Naive thymus-derived CD4-positive, alpha-beta T cell (primary cell): ENCODE measurements at regions of chr7 and their contacts with region 1.

Region 1: DNA sequence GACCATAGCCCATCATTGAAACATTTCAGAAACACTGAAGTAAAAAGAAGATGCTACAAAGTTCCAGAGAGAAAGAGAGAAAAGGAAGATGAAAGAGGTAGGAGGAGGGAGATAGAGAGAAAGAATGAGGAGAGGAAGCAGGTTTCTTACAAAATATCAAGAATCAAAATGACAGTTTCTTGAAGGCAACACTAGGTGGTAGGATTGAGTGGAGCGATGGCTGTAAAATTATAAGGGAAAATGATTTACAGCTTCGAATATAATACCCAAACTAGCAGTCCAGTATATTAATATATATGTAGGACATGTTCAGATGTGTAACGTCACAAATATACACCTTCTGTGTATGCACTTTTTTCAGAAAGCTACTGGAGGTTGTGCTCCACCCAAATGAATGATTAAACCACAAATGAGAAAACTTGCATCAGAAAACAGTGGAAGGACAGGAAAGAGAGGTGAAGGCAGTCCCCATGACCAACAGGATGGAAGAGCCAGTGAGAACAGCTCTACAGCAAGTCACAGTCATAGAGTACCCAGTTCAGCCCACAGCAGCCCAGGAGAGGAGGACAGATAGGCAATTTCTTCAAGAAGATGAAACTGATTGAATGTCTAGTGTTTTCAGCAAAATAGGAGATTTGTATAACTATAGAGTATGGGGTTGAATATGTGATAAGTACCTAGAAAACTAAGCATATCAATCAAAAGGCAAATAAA is 151.5 kb upstream of the TARP start:
- DNase-seq: no peak
- ATAC-seq: no peak
- H3K4me3 ChIP-seq: no peak overlapping the region
- H3K4me3 Mint-ChIP-seq: peak overlapping the region in 9 of 10 donors; percentile 15 to 78 (median 61)
- H3K27ac ChIP-seq: peak overlapping the region; percentile 34
- H3K27ac Mint-ChIP-seq: peak overlapping the region in 8 of 9 donors; percentile 67 to 91 (median 85)
- H3K4me1 ChIP-seq: peaks cover 20 to 41% of the 10 kb centered on the region in 2 donors
- H3K4me1 Mint-ChIP-seq: peaks cover 28 to 64% (median 58%) of the 10 kb centered on the region in 7 donors
- H3K27me3 ChIP-seq: no peaks in the 10 kb centered on the region
- H3K27me3 Mint-ChIP-seq: peaks cover 0 to 10% (median 0%) of the 10 kb centered on the region in 5 donors

Region 2: GRCh38 chr7:38413784-38414183 is 11.1 kb before region 1 on chr7:
- CTCF ChIA-PET with region 1: no interaction called
- POLR2A ChIA-PET with region 1: interaction called, 3 read pairs
- intact Hi-C with region 1: loop called in 1 of 2 experiments (anchors 2 kb)
- DNase-seq: peak in 6 of 9 donors; percentile 24 to 60 (median 41)
- ATAC-seq: peak; percentile 54
- H3K4me3 ChIP-seq: no peak overlapping the region
- H3K4me3 Mint-ChIP-seq: peak overlapping the region in 7 of 10 donors; percentile 23 to 71 (median 40)
- H3K27ac ChIP-seq: no peak overlapping the region
- H3K27ac Mint-ChIP-seq: peak overlapping the region in 6 of 9 donors; percentile 38 to 90 (median 77)
- H3K4me1 ChIP-seq: peaks cover 0 to 12% of the 10 kb centered on the region in 2 donors
- H3K4me1 Mint-ChIP-seq: peaks cover 2 to 32% (median 29%) of the 10 kb centered on the region in 7 donors
- H3K27me3 ChIP-seq: no peaks in the 10 kb centered on the region
- H3K27me3 Mint-ChIP-seq: peaks cover 0 to 12% (median 0%) of the 10 kb centered on the region in 5 donors

Region 3: DNA sequence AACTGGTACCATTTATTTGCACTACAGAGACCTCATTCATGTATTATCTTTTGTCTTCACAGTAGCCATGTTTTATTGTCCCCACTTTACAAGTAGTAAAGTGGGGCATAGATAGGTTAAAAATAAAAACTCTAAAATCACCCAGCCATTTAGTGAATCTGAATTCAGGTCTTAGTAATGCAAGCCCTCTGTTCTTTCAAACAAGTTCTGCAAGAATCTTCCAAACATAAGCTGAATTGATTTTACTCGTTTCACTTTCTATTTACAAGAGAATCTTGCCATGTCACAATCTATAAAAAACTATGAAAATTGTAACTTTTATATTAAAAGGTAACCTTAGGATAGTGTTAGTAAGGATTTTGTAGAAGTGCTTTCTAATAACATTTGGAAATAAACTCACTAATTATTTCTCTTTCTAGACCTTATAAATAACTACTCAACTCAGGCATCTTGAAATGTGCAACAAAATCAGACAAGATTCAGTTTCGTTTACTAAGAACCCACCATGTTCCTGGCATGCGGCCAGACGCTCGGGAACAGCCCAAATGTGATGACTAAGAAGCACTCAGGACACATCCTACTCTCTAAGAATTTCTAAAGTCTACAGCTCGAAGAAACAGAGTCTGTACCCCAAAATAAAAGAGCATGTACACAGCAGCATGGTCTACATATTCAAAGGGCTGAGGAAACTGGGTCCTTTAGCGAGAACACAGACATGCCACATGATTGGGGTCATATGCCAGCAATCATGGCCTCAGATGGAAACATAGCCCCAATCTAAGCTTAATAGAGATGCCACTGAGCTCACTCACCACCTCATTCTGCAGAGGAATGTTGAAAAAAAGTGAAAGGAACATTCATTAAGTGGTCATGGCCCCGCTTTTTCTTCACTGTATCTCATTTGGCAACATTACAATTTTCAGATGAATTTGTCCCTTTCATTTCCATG is 38.6 kb after region 1 on chr7:
- CTCF ChIA-PET with region 1: no interaction called
- POLR2A ChIA-PET with region 1: no interaction called
- intact Hi-C with region 1: loop called in 1 of 2 experiments (anchors 5 kb)
- DNase-seq: peak; percentile 40 to 75 (median 61)
- ATAC-seq: peak; percentile 69
- H3K4me3 ChIP-seq: peak overlapping the region; percentile 28
- H3K4me3 Mint-ChIP-seq: peak overlapping the region; percentile 53 to 85 (median 70)
- H3K27ac ChIP-seq: no peak overlapping the region
- H3K27ac Mint-ChIP-seq: peak overlapping the region; percentile 13 to 83 (median 78)
- H3K4me1 ChIP-seq: peaks cover 0 to 5% of the 10 kb centered on the region in 2 donors
- H3K4me1 Mint-ChIP-seq: peaks cover 7 to 21% (median 14%) of the 10 kb centered on the region in 7 donors
- H3K27me3 ChIP-seq: no peaks in the 10 kb centered on the region
- H3K27me3 Mint-ChIP-seq: peaks cover 0 to 7% (median 0%) of the 10 kb centered on the region in 5 donors

Region 4: GRCh38 chr7:38630720-38631673 is 206.1 kb after region 1 on chr7 and contains the start of gene AMPH:
- CTCF ChIA-PET with region 1: no interaction called
- POLR2A ChIA-PET with region 1: no interaction called
- intact Hi-C with region 1: loop called in 1 of 2 experiments (anchors 1 kb)
- DNase-seq: peak in 2 of 9 donors; percentile 2 to 3
- ATAC-seq: no peak
- H3K4me3 ChIP-seq: no peak within 1 kb of the TSS
- H3K4me3 Mint-ChIP-seq: peak within 1 kb of the TSS; percentile 53 to 82 (median 76)
- H3K27ac ChIP-seq: no peak within 1 kb of the TSS
- H3K27ac Mint-ChIP-seq: no peak within 1 kb of the TSS
- H3K4me1 ChIP-seq: no peaks in the 10 kb centered on the region
- H3K4me1 Mint-ChIP-seq: peaks cover 0 to 22% (median 11%) of the 10 kb centered on the region in 7 donors
- H3K27me3 ChIP-seq: no peaks in the 10 kb centered on the region
- H3K27me3 Mint-ChIP-seq: peaks cover 40 to 67% (median 56%) of the 10 kb centered on the region in 5 donors
- total RNA-seq, gene AMPH: not detected

Region 5: DNA sequence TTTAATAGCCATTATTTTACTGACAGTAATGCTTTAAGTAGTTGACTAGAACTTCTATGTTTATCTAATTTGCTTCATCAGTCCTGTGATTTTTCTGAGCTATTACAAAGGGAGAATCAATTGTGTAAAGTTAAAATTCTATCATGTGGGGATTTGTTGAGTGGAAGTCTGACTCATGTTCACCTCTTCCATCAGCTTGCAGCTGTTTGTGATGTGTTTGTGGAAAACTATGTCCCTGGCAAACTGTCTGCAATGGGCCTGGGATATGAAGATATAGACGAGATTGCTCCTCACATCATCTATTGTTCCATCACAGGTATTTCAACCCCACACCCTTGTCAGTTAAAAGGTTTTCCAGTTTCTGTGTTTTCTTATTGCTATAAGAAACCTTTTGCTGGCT is 1769.8 kb after region 1 on chr7:
- CTCF ChIA-PET with region 1: no interaction called
- POLR2A ChIA-PET with region 1: no interaction called
- intact Hi-C with region 1: no loop called
- DNase-seq: no peak
- ATAC-seq: no peak
- H3K4me3 ChIP-seq: no peak overlapping the region
- H3K4me3 Mint-ChIP-seq: no peak overlapping the region
- H3K27ac ChIP-seq: no peak overlapping the region
- H3K27ac Mint-ChIP-seq: no peak overlapping the region
- H3K4me1 ChIP-seq: no peaks in the 10 kb centered on the region
- H3K4me1 Mint-ChIP-seq: no peaks in the 10 kb centered on the region
- H3K27me3 ChIP-seq: no peaks in the 10 kb centered on the region
- H3K27me3 Mint-ChIP-seq: no peaks in the 10 kb centered on the region